Activated B cell treated with CpG ODN at 0.5 μM for 24 hours (primary cell): ENCODE measurements at regions of chr4 and their contacts with region 1.

Region 1: GRCh38 chr4:85725721-85726170 is 250.8 kb downstream of the ARHGAP24 start:
- DNase-seq: peak; percentile 35
- ATAC-seq: peak; percentile 90
- H3K4me3 Mint-ChIP-seq: peak overlapping the region; percentile 51
- H3K27ac Mint-ChIP-seq: peak overlapping the region; percentile 92
- H3K4me1 Mint-ChIP-seq: peaks cover 53% of the 10 kb centered on the region
- H3K27me3 Mint-ChIP-seq: no peaks in the 10 kb centered on the region
- CTCF ChIP-seq: no peak

Region 2: GRCh38 chr4:85607624-85608023 is 118.1 kb before region 1 on chr4:
- CTCF ChIA-PET with region 1: no interaction called
- POLR2A ChIA-PET with region 1: interaction called, 5 read pairs
- intact Hi-C with region 1: loop called (anchors 5 kb)
- DNase-seq: no peak
- ATAC-seq: peak; percentile 90
- H3K4me3 Mint-ChIP-seq: peak overlapping the region; percentile 70
- H3K27ac Mint-ChIP-seq: peak overlapping the region; percentile 92
- H3K4me1 Mint-ChIP-seq: peaks cover 50% of the 10 kb centered on the region
- H3K27me3 Mint-ChIP-seq: no peaks in the 10 kb centered on the region
- CTCF ChIP-seq: no peak